Activated naive CD4-positive, alpha-beta T cell treated with anti-CD3 and anti-CD28 coated beads for 36 hours (primary cell): ENCODE measurements at regions of chr7 and their contacts with region 1.

Region 1: GRCh38 chr7:43071604-43072003 is 40.8 kb upstream of the HECW1 start:
- DNase-seq: peak; percentile 47
- H3K4me3 Mint-ChIP-seq: no peak overlapping the region
- H3K27ac Mint-ChIP-seq: no peak overlapping the region
- H3K4me1 Mint-ChIP-seq: peaks cover 6% of the 10 kb centered on the region
- H3K27me3 Mint-ChIP-seq: peaks cover 26% of the 10 kb centered on the region

Region 2: GRCh38 chr7:42082144-42082543 is 989.5 kb before region 1 on chr7:
- CTCF ChIA-PET with region 1: no interaction called
- intact Hi-C with region 1: no loop called
- DNase-seq: no peak
- H3K4me3 Mint-ChIP-seq: no peak overlapping the region
- H3K27ac Mint-ChIP-seq: no peak overlapping the region
- H3K4me1 Mint-ChIP-seq: no peaks in the 10 kb centered on the region
- H3K27me3 Mint-ChIP-seq: peaks cover 17% of the 10 kb centered on the region

Region 3: DNA sequence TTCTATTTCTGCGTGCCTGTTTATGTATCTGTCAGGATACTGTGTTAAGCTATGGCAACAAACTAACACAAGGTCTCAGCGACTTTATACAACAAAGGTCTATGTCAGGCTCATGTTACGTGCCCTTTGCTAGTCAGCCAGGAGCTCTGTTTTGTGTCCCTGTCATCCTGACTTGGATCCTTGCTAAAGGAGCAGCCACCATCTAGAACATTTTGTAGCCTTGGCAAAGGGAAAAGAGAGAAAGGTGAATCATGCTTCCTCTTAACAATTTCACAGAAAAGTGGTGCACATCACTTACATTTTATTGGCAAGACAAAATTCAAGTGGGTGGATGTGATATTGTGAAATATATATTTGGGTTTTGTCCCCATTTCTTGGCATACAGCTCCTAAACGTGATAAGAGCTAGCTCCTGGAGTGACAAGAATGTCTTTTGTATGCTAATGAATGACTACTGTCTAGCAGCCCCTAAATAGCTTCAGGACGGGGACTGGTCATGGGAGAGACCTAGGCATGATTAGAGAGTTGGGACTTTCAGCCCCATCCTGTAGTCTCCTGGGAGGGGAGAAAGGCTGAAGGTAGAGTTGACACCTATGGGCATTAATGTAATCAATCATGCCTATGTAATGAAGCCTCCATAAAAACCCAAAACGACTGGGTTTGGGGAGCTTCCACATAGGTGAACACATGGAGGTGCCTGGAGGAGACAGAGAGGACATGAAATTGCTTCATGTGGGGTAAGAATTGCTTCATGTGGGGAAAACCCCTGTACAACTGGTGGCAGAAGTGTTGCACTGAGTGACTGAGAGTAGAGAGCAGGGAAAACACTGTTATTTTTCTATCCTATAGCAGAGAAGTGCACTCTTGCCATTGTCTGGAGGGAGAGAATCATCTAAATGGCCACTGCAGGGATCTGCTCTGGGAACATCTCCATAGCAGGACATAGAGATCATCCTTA is 106.5 kb before region 1 on chr7:
- CTCF ChIA-PET with region 1: no interaction called
- intact Hi-C with region 1: loop called (anchors 1 kb)
- DNase-seq: peak; percentile 48
- H3K4me3 Mint-ChIP-seq: no peak overlapping the region
- H3K27ac Mint-ChIP-seq: peak overlapping the region; percentile 47
- H3K4me1 Mint-ChIP-seq: peaks cover 27% of the 10 kb centered on the region
- H3K27me3 Mint-ChIP-seq: peaks cover 17% of the 10 kb centered on the region

Region 4: DNA sequence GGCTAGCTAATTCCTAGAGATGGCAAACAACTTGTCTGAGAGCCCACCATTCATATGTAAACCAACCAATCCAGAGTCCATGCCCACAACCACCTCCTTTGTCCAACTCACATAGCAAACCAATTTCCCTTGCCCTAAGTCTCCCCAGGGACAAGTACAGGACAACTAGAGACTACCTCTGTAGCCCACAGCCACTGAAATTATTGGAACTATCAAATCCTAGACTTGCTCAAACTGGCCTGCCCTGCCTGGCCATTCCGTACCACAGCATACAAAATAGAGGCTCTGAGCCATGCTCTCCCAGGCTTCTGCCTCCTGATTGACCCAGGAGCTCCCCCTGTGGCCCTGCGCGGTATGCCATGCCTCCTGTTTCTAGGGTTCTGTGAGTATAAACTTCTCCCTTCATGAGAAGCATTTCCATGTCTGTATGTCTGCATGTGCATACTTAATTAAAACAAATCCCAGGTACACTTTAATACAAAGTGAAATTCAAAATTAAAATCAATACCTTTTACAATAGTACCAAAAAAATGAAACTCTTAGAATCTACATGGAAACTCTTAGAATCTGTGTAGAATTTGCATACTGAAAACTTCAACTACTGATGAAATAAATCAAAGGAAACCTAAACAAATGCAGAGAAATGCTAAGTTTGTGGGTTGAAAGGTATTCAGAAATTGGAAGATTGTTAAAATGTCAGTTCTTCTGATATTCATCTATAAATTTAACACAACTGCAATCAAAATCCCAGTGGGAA is 36.8 kb after region 1 on chr7:
- CTCF ChIA-PET with region 1: interaction called, 7 read pairs
- intact Hi-C with region 1: loop called (anchors 2 kb)
- DNase-seq: peak; percentile 82
- H3K4me3 Mint-ChIP-seq: no peak overlapping the region
- H3K27ac Mint-ChIP-seq: no peak overlapping the region
- H3K4me1 Mint-ChIP-seq: no peaks in the 10 kb centered on the region
- H3K27me3 Mint-ChIP-seq: peaks cover 51% of the 10 kb centered on the region

Region 5: GRCh38 chr7:43735802-43736541 is 664.4 kb after region 1 on chr7:
- CTCF ChIA-PET with region 1: no interaction called
- intact Hi-C with region 1: loop called (anchors 10 kb)
- DNase-seq: peak; percentile 86
- H3K4me3 Mint-ChIP-seq: no peak overlapping the region
- H3K27ac Mint-ChIP-seq: peak overlapping the region; percentile 75
- H3K4me1 Mint-ChIP-seq: peaks cover 22% of the 10 kb centered on the region
- H3K27me3 Mint-ChIP-seq: peaks cover 7% of the 10 kb centered on the region